ENCODE measurements at regions of chr10 and their contacts with region 1.

Region 1: GRCh38 chr10:90862908-90863514 is 5.2 kb upstream of the HTR7 start:
- DNase-seq: peak; percentile 49
- H3K4me3 ChIP-seq: no peak overlapping the region
- H3K27ac ChIP-seq: no peak overlapping the region
- H3K4me1 ChIP-seq: peaks cover 19% of the 10 kb centered on the region
- H3K27me3 ChIP-seq: peaks cover 24 to 43% of the 10 kb centered on the region in 2 experiments
- CTCF ChIP-seq: peak; percentile 57 to 62
- POLR2A ChIP-seq: no peak

Region 2: DNA sequence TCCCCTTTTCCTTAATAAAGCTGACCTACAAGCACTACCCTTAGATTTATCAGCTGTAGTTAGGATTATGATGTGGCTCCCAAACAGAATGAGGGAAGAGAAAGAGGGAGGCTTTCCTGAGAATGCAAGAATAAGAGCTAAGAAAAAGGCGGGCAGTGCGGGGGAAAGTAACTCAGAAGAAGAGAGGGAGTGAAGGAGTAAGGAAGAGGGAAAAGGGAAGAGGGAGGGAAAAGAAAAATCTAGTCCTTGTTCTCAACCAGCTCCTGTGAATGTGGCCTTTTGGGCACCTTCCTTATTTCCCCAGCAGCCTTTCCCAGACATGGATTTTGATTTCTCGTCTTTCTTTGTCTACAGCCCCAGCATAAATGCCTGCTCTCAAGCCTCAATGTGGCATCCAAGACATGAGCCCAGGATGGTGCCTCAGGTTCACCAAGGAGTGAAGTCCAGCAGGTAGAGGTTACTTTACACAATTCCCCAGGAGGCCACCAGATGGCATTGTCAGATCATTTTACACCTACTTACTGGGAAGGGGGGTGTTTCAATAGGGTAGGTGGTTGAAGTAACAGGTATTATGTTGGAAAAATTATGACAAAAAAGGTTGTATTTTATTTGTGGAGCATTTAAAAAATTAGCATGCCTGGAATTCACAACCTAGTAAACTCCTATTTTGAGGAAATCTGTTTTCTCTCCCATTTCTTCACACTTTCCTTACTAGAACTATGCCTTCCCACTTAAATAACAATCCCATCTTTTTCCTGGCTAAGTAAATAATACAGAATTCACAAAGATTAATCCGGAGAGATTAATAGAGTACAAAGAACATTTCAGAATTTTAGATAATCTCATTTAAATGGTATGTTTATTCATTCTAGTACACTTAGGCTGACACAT is 111.7 kb before region 1 on chr10:
- CTCF ChIA-PET with region 1: interaction called, 169 read pairs
- POLR2A ChIA-PET with region 1: no interaction called
- dilution Hi-C with region 1: no loop called
- intact Hi-C with region 1: loop called (anchors 1 kb)
- DNase-seq: peak; percentile 58
- H3K4me3 ChIP-seq: no peak overlapping the region
- H3K27ac ChIP-seq: no peak overlapping the region
- H3K4me1 ChIP-seq: no peaks in the 10 kb centered on the region
- H3K27me3 ChIP-seq: peaks cover 4 to 11% of the 10 kb centered on the region in 2 experiments
- CTCF ChIP-seq: peak; percentile 63 to 66
- POLR2A ChIP-seq: no peak

Region 3: GRCh38 chr10:90779548-90779947 is 83.5 kb before region 1 on chr10:
- CTCF ChIA-PET with region 1: interaction called, 5 read pairs
- POLR2A ChIA-PET with region 1: no interaction called
- dilution Hi-C with region 1: no loop called
- intact Hi-C with region 1: loop called (anchors 1 kb)
- DNase-seq: peak; percentile 26
- H3K4me3 ChIP-seq: no peak overlapping the region
- H3K27ac ChIP-seq: no peak overlapping the region
- H3K4me1 ChIP-seq: no peaks in the 10 kb centered on the region
- H3K27me3 ChIP-seq: peaks cover 0 to 10% of the 10 kb centered on the region in 2 experiments
- CTCF ChIP-seq: peak; percentile 25 to 31
- POLR2A ChIP-seq: no peak

Region 4: GRCh38 chr10:90905925-90906324 is 42.9 kb after region 1 on chr10:
- CTCF ChIA-PET with region 1: no interaction called
- POLR2A ChIA-PET with region 1: no interaction called
- dilution Hi-C with region 1: no loop called
- intact Hi-C with region 1: no loop called
- DNase-seq: no peak
- H3K4me3 ChIP-seq: no peak overlapping the region
- H3K27ac ChIP-seq: no peak overlapping the region
- H3K4me1 ChIP-seq: peaks cover 11% of the 10 kb centered on the region
- H3K27me3 ChIP-seq: no peaks in the 10 kb centered on the region
- CTCF ChIP-seq: no peak
- POLR2A ChIP-seq: no peak